GM13976 (cell line): ENCODE measurements at regions of chr11 and their contacts with region 1.

Region 1: DNA sequence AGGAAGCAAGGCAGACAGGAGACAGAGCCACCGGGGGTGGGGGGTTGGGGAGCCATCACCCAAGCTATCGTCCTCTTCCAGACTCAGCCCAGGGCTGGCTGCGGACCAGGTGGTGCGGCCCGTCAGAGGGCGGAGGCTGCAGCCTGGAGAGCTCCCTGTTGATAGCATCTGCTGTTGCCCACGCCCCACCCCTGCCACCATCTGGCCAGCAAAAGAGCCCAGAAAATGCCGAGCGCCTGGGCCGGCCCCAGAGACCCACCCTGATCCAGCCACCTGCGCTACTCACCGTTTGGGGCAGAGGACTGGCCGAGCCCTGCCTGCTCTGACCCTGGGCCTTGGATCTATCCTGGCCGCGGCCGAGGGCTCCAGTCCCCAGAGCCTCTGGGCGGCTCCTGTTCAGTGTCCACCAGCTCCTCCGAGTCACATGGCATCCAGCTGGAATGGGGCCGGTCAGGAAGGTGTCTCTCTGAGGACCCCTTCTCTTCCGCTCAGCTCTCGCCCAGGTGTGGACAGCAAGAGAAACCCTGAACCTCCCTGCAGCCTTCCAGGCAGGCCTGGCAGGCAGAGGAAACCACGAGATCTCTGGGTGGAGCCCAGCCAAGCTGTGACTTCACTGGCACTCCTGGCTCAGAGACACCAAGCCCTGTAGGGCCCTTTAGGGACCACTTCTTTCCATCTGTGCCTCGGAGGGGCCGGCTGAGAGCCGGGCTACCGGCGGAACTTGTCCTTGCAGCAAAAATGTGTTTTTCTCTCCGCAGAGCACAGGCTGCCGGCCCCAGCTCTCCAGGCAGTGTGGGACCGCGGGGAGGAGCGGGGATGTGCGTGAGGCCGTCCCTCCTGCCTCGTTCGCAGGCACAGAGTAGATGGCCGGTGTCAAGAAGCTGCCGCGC is at the start of gene MRGPRE:
- DNase-seq: no peak
- CTCF ChIP-seq: no peak

Region 2: DNA sequence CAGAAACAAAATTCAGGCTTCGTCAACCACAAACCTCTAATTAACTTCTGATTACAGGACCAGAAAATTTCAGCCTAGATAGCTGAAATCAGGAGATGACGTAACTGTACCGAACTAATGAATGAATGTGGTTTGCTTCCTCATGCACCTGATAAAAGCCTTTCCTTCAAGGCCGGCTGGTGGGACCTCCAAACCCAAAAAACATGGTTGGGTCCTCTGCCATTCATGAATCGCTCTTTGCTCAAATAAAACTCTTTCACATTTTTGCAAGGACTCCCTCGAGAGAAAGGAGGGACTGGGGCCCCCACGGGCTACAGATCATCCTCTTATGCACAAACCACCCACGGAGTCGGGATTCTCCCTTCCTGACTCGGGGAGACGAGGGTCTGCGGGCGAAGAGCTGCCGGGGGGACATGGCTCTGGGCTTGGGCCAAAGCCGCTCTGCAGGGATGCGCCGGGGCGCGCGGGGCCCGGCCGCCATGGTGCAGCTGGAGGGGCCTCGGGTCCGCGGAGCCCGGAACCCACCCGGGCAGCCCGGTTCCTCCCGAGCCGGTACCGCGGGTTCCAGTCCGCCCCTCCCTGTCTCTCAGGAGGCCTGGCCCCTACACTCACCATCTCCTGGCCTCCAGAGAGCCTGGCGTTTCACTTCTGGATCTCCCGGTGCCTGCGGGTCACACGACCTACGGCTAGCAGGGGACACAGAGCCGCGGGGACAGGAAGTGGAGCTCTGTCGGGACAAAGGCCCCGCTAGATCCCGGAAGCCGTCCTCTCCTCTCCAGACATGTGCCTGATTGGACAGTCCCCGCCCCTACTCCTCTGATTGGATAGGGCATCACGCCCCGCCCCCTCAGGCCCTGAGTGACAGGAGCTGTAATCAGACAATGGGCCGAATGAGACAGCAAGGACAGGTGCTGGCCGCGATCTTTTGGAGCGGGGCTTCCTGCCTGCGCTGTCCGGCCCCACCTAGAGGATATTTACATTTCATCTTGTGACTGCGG is 146.6 kb after region 1 on chr11 and contains the start of gene ZNF195:
- in situ Hi-C with region 1: loop called (anchors 25 kb)
- DNase-seq: peak; percentile 98
- CTCF ChIP-seq: no peak